OCI-LY7 (cell line): ENCODE measurements at regions of chr12 and their contacts with region 1.

Region 1: DNA sequence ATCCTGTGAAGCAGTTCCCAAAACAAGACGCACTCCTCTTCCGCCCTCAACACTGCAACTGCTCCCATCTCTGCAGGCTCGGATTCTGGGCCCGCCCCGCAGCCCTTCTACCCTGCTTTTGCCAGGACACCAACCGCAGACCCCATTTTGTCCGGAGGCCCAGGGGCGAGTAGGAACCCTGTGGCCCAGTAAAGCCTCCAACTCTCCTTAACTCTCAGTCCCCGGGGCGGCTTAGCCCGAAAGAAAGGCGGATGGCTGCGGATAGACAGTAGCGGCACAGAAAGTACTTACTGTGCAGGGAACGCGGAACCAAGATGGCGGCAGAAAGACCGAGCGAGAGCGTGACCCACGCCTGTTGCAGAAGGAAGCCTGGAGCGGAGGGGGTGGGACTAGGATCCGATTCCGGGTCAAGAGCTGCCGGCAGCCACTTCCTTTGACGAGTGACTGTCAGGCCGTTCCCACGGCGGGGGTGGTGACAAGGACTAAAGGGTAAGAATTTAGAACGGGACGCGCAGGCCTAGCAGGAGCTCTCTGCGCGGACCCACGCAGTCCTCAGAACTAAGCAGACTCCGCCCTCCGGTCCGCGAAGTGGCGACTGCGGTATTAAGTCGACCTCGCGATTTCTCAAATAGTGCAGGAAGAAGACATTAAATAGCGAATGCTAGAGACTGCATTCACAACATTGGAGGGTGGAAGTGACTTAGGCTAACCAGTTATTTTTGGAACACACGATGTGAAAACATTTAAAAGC is at the start of gene NACA:
- DNase-seq: peak; percentile 97
- H3K4me3 ChIP-seq: peak within 1 kb of the TSS; percentile 93
- H3K27ac ChIP-seq: peak within 1 kb of the TSS; percentile 91
- H3K4me1 ChIP-seq: peaks cover 42% of the 10 kb centered on the region
- CTCF ChIP-seq: no peak
- total RNA-seq, gene NACA: 1,560 and 1,723 TPM in 2 replicates

Region 2: DNA sequence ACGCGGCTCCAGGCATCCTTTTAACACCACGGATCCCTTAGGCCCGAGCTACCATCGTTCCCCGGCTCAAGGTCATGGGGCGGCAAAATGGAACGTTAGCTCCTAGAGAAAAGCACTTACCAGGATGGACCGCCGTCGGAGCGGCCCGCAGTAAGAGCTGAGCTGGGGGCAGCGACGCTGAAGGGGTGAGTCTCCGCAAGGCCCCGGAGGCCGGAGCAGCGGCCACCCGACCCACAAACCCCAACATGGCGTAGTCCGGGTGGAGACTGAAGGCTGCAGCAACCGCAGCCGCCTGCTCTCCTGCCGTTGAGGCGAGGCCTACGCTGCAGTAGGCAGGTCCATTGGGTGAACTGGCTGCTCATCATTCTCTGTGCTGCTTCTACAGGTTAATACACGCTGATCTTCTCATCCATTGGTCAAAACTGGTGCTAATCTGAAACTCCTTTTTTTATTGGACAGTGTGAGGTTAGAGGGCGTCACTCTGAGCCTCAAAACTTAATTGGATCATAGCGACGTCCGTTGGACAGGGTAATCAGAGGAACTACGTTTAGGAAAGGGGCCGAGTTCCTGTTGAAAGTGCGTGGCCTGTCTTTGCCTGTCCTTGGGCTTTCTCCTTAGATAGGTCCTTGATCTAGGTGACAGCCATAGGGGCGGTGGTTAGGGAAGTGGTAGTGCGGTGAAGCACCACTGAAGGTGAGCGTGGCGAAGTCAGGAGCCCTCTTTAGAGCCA is 79.3 kb before region 1 on chr12 and contains the start of gene ATP5F1B:
- CTCF ChIA-PET with region 1: interaction called, 3 read pairs
- POLR2A ChIA-PET with region 1: interaction called, 3 read pairs
- intact Hi-C with region 1: loop called (anchors 2 kb)
- DNase-seq: peak; percentile 99
- H3K4me3 ChIP-seq: peak within 1 kb of the TSS; percentile 88
- H3K27ac ChIP-seq: peak within 1 kb of the TSS; percentile 81
- H3K4me1 ChIP-seq: peaks cover 22% of the 10 kb centered on the region
- CTCF ChIP-seq: no peak
- total RNA-seq, gene ATP5F1B: 348 and 385 TPM in 2 replicates

Region 3: GRCh38 chr12:56751712-56752598 is 26.8 kb after region 1 on chr12 and contains the start of gene PRIM1:
- CTCF ChIA-PET with region 1: no interaction called
- POLR2A ChIA-PET with region 1: interaction called, 8 read pairs
- intact Hi-C with region 1: loop called (anchors 1 kb)
- DNase-seq: peak; percentile 94
- H3K4me3 ChIP-seq: peak within 1 kb of the TSS; percentile 76
- H3K27ac ChIP-seq: peak within 1 kb of the TSS; percentile 94
- H3K4me1 ChIP-seq: peaks cover 25% of the 10 kb centered on the region
- CTCF ChIP-seq: no peak
- total RNA-seq, gene PRIM1: 17.1 and 20.4 TPM in 2 replicates